Heart left ventricle (tissue), 16 donors: ENCODE measurements at regions of chr9 and their contacts with region 1.

Region 1: GRCh38 chr9:97982683-97983588 is at the start of gene ANP32B:
- DNase-seq: peak; percentile 92 to 96 (median 93)
- ATAC-seq: peak; percentile 75 to 94 (median 92)
- H3K4me3 ChIP-seq: peak within 1 kb of the TSS; percentile 70 to 99 (median 96)
- H3K27ac ChIP-seq: peak within 1 kb of the TSS; percentile 96 to 99 (median 98)
- H3K4me1 ChIP-seq: peaks cover 0 to 54% (median 44%) of the 10 kb centered on the region in 12 donors
- H3K27me3 ChIP-seq: no peaks in the 10 kb centered on the region
- CTCF ChIP-seq: peak; percentile 66 to 99 (median 90)
- POLR2A ChIP-seq: peak in 1 of 2 donors; percentile 27
- total RNA-seq, gene ANP32B: 16.3 to 78.3 (median 45.7) TPM

Region 2: DNA sequence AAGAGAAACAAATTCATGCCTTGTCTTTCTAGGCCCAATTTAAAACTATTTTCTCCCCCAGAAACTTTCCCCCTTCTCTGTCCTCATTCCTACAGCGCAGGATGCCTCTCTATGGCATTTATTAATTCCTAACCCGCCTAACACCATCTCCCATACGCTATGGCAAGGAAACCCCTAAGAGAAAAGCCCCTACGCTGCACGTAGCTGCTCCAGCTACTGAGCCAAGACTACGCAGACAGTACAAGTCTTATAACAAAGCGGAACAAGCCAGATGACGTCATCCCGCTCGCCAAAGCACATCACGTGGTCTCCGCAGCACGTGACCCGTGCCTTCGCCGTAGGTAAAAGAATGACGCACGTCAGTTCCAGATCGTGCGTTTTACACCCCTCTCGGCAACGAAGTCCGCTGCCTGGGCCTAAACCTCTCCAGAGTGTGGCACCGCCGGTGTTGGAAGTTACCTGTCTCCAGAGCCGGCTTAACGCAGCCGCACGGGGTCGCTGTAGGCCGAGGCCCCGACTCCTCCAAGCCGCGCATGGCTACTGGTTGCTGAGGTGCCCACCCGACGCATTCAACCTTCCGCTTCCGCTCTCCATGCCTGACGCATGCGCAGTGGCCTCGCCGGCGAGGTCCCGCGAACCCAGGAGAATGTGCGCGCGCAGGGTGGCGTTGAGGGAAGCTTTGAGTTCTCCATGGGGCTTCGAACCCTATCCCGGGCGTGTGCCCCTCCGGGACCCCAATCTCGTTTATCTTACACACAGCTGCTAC is 60.8 kb before region 1 on chr9 and contains the start of gene TRMO:
- intact Hi-C with region 1: loop called (anchors 1 to 10 kb)
- DNase-seq: peak; percentile 97 to 99 (median 98)
- ATAC-seq: peak; percentile 96 to 97 (median 97)
- H3K4me3 ChIP-seq: peak within 1 kb of the TSS; percentile 20 to 76 (median 62)
- H3K27ac ChIP-seq: peak within 1 kb of the TSS; percentile 87 to 99 (median 96)
- H3K4me1 ChIP-seq: peaks cover 0 to 51% (median 15%) of the 10 kb centered on the region in 12 donors
- H3K27me3 ChIP-seq: peaks cover 0 to 15% (median 0%) of the 10 kb centered on the region in 9 donors
- CTCF ChIP-seq: peak; percentile 49 to 93 (median 78)
- POLR2A ChIP-seq: peak; percentile 44 to 68
- total RNA-seq, gene TRMO: 5.2 to 23.3 (median 8.0) TPM

Region 3: DNA sequence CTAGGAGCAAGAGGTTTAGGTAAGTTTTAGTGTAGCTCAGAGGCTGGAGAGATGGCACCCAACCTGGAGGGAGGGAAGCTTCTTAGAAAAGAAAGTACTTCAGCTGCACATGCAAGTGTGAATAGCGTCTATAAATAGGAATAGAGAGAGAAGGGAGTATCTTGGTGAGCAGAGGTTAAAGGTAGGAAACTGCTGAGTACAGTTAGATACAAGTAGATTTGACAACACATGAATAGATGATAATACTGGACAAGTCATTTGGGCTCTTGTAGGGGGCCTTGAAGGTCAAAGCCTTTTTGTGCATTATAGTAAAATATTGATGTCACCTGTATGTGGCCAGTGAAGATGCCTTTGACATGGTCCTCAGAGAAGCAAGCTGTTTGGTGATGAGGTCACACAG is 34.4 kb after region 1 on chr9:
- intact Hi-C with region 1: loop called in 3 of 10 experiments (anchors 2 to 5 kb)
- DNase-seq: no peak
- ATAC-seq: peak in 3 of 4 donors; percentile 14 to 38 (median 23)
- H3K4me3 ChIP-seq: no peak overlapping the region
- H3K27ac ChIP-seq: peak overlapping the region in 4 of 12 donors; percentile 35 to 64 (median 46)
- H3K4me1 ChIP-seq: peaks cover 0 to 50% (median 5%) of the 10 kb centered on the region in 12 donors
- H3K27me3 ChIP-seq: no peaks in the 10 kb centered on the region
- CTCF ChIP-seq: no peak
- POLR2A ChIP-seq: no peak

Region 4: GRCh38 chr9:98034593-98035546 is 51.9 kb after region 1 on chr9:
- intact Hi-C with region 1: loop called in 5 of 10 experiments (anchors 2 to 10 kb)
- DNase-seq: peak; percentile 81 to 88 (median 83)
- ATAC-seq: peak; percentile 70 to 91 (median 88)
- H3K4me3 ChIP-seq: peak overlapping the region in 6 of 12 donors; percentile 15 to 31 (median 30)
- H3K27ac ChIP-seq: no peak overlapping the region
- H3K4me1 ChIP-seq: peaks cover 0 to 22% (median 13%) of the 10 kb centered on the region in 12 donors
- H3K27me3 ChIP-seq: no peaks in the 10 kb centered on the region
- CTCF ChIP-seq: peak; percentile 72 to 92 (median 86)
- POLR2A ChIP-seq: no peak

Region 5: DNA sequence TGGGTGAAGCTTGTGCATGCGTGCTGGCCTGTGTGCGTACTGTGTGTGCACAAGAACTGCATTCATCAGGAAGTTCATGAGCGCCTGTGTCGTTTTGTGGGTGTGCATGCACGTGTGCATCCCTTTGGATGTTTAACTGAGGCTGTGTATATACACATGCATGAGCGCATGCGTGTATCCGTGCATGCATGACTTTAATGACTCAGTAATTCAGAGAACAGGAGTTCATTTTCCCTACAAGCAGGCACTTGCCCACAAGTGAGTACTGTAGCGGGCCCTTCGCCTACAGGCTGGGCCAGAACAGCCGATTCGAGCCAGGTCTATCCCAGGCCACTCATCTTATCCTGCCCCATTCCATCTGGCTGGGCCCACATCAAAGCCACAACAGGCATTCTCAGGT is 179.7 kb after region 1 on chr9:
- intact Hi-C with region 1: no loop called
- DNase-seq: no peak
- ATAC-seq: no peak
- H3K4me3 ChIP-seq: no peak overlapping the region
- H3K27ac ChIP-seq: no peak overlapping the region
- H3K4me1 ChIP-seq: no peaks in the 10 kb centered on the region
- H3K27me3 ChIP-seq: no peaks in the 10 kb centered on the region
- CTCF ChIP-seq: no peak
- POLR2A ChIP-seq: no peak

Region 6: GRCh38 chr9:98255578-98256296 is 272.8 kb after region 1 on chr9 and contains the start of gene TBC1D2:
- intact Hi-C with region 1: loop called in 3 of 10 experiments (anchors 5 kb)
- DNase-seq: peak; percentile 95 to 98 (median 95)
- ATAC-seq: peak; percentile 95 to 98 (median 98)
- H3K4me3 ChIP-seq: peak within 1 kb of the TSS; percentile 58 to 97 (median 76)
- H3K27ac ChIP-seq: peak within 1 kb of the TSS; percentile 82 to 98 (median 94)
- H3K4me1 ChIP-seq: peaks cover 0 to 49% (median 15%) of the 10 kb centered on the region in 12 donors
- H3K27me3 ChIP-seq: no peaks in the 10 kb centered on the region
- CTCF ChIP-seq: peak in 6 of 12 donors; percentile 2 to 42 (median 12)
- POLR2A ChIP-seq: no peak
- total RNA-seq, gene TBC1D2: 1.1 to 9.4 (median 2.2) TPM

Region 7: GRCh38 chr9:98391867-98392266 is 408.9 kb after region 1 on chr9:
- intact Hi-C with region 1: no loop called
- DNase-seq: no peak
- ATAC-seq: peak in 1 of 4 donors; percentile 35
- H3K4me3 ChIP-seq: no peak overlapping the region
- H3K27ac ChIP-seq: no peak overlapping the region
- H3K4me1 ChIP-seq: no peaks in the 10 kb centered on the region
- H3K27me3 ChIP-seq: peaks cover 0 to 3% (median 0%) of the 10 kb centered on the region in 9 donors
- CTCF ChIP-seq: no peak
- POLR2A ChIP-seq: no peak